ENCODE measurements at regions of chr19 and their contacts with region 1.

Region 1: DNA sequence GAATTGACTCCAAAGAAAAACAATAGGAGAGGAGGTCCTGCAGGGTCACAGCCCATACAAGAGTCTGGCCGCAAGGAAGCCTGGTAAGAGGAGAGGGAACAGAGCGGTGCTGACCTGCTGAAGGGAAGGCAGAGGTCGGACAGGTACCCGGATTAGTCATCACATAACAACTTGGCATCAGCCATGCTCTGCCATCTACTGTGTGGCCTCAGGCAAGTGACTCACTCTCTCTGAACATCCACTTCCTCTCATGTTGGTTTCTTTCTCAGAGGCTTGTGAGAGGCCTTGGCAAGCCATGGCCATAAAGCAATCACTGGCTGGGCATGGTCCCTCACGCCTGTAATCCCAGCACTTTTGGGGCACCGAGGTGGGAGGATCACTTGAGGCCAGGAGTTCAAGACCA is 7.4 kb upstream of the CAPNS1 start:
- DNase-seq: no peak
- ATAC-seq: no peak
- H3K4me3 ChIP-seq: no peak overlapping the region
- H3K27ac ChIP-seq: no peak overlapping the region
- H3K4me1 ChIP-seq: peaks cover 56% of the 10 kb centered on the region
- H3K27me3 ChIP-seq: no peaks in the 10 kb centered on the region
- CTCF ChIP-seq: no peak
- EP300 ChIP-seq: no peak
- POLR2A ChIP-seq: no peak
- RAD21 ChIP-seq: no peak

Region 2: GRCh38 chr19:36009220-36009619 is 123.3 kb before region 1 on chr19:
- CTCF ChIA-PET with region 1: no interaction called
- POLR2A ChIA-PET with region 1: no interaction called
- in situ Hi-C with region 1: no loop called
- intact Hi-C with region 1: no loop called
- DNase-seq: no peak
- ATAC-seq: no peak
- H3K4me3 ChIP-seq: peak overlapping the region in 1 of 3 experiments; percentile 93; a peak in 2 of 6 replicates
- H3K27ac ChIP-seq: peak overlapping the region; percentile 35
- H3K4me1 ChIP-seq: peaks cover 46% of the 10 kb centered on the region
- H3K27me3 ChIP-seq: no peaks in the 10 kb centered on the region; a peak in 1 of 5 replicates
- CTCF ChIP-seq: no peak
- EP300 ChIP-seq: no peak
- POLR2A ChIP-seq: no peak
- RAD21 ChIP-seq: no peak

Region 3: DNA sequence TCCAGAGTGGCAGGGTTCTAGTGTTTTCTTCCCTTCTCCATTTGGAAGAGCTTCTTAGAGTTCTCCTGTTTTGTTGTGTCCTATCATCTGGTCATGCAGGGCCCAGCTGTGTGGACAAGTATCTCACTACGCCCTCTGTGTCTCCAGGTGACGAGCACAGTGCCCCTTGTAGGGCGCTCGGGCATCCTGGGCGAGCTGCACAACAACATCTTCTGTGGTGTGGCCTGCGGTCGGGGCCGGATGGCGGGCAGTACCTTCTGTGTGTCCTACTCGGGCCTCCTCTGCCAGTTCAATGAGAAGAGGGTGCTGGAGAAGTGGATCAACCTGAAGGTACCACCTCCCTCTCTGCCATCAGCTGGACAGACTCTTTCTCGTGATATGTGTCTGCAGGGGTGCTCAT is 64.8 kb before region 1 on chr19:
- CTCF ChIA-PET with region 1: no interaction called
- POLR2A ChIA-PET with region 1: no interaction called
- in situ Hi-C with region 1: no loop called
- intact Hi-C with region 1: no loop called
- DNase-seq: no peak
- ATAC-seq: no peak
- H3K4me3 ChIP-seq: no peak overlapping the region
- H3K27ac ChIP-seq: no peak overlapping the region
- H3K4me1 ChIP-seq: no peaks in the 10 kb centered on the region
- H3K27me3 ChIP-seq: no peaks in the 10 kb centered on the region
- CTCF ChIP-seq: no peak
- EP300 ChIP-seq: no peak
- POLR2A ChIP-seq: no peak
- RAD21 ChIP-seq: no peak

Region 4: GRCh38 chr19:36114763-36115452 is 17.6 kb before region 1 on chr19 and contains the start of gene POLR2I:
- CTCF ChIA-PET with region 1: no interaction called
- POLR2A ChIA-PET with region 1: interaction called, 36 read pairs
- in situ Hi-C with region 1: no loop called
- intact Hi-C with region 1: no loop called
- DNase-seq: peak; percentile 99
- ATAC-seq: peak; percentile 93
- H3K4me3 ChIP-seq: peak within 1 kb of the TSS; percentile 72 to 93 (median 88)
- H3K27ac ChIP-seq: peak within 1 kb of the TSS; percentile 77
- H3K4me1 ChIP-seq: peaks cover 45% of the 10 kb centered on the region
- H3K27me3 ChIP-seq: no peaks in the 10 kb centered on the region; a peak in 1 of 5 replicates
- CTCF ChIP-seq: 0 out of 2 replicates have a peak, but pooled peaks have one; percentile 21
- EP300 ChIP-seq: no peak
- POLR2A ChIP-seq: peak; percentile 60 to 75
- RAD21 ChIP-seq: peak; percentile 66
- total RNA-seq, gene POLR2I: 101 and 104 TPM in 2 replicates

Region 5: GRCh38 chr19:36120092-36120983 is 12.2 kb before region 1 on chr19:
- CTCF ChIA-PET with region 1: no interaction called
- POLR2A ChIA-PET with region 1: interaction called, 36 read pairs
- in situ Hi-C with region 1: no loop called
- intact Hi-C with region 1: no loop called
- DNase-seq: peak; percentile 92
- ATAC-seq: peak; percentile 82
- H3K4me3 ChIP-seq: peak overlapping the region; percentile 58 to 77 (median 64); a peak in 5 of 6 replicates
- H3K27ac ChIP-seq: peak overlapping the region; percentile 76
- H3K4me1 ChIP-seq: peaks cover 60% of the 10 kb centered on the region
- H3K27me3 ChIP-seq: no peaks in the 10 kb centered on the region
- CTCF ChIP-seq: peak; percentile 24
- EP300 ChIP-seq: peak; percentile 51 to 82; a peak in 3 of 4 replicates
- POLR2A ChIP-seq: peak in 1 of 2 experiments; percentile 78; a peak in 2 of 4 replicates
- RAD21 ChIP-seq: no peak

Region 6: DNA sequence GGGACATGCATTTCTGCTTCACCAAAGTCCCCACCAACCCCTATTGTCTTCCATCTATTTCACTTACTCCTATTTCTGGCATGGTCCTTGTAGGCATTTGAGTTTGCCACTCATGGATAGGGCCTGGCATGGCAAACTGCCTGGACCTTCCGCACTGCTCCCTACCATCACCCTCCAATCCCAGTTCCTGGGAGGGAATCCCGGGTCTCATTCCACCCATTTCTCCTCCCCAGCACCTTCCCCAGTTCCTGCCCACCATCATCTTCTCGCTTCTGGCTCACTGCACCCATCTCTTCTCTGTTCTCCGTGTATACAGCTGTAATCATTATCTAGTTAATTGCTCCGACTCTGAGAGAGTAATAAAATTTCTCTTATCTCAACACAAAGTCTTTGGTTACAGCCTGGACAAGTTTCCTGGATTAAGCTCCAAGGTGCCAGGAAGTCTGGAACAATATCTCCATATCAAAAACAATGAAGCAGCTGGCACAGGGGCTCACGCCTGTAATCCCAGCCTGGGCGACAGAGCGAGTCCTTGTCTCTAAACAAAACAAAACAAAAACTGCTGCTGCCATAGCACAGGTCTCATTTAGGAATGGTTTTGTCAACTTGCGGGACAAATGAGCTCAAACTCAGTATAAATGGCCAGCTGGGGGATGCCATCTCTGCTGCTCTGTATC is 36.7 kb after region 1 on chr19:
- CTCF ChIA-PET with region 1: interaction called, 44 read pairs
- POLR2A ChIA-PET with region 1: interaction called, 10 read pairs
- in situ Hi-C with region 1: loop called (anchors 5 kb)
- intact Hi-C with region 1: loop called (anchors 1 kb)
- DNase-seq: no peak
- ATAC-seq: no peak
- H3K4me3 ChIP-seq: no peak overlapping the region
- H3K27ac ChIP-seq: no peak overlapping the region
- H3K4me1 ChIP-seq: 0 out of 2 replicates have a peak, but pooled peaks cover 10% of the 10 kb centered on the region
- H3K27me3 ChIP-seq: no peaks in the 10 kb centered on the region; a peak in 1 of 5 replicates
- CTCF ChIP-seq: no peak
- EP300 ChIP-seq: no peak
- POLR2A ChIP-seq: no peak
- RAD21 ChIP-seq: no peak

Region 7: GRCh38 chr19:36214386-36215275 is 82.1 kb after region 1 on chr19 and contains the starts of genes ZNF146 and ZNF565:
- CTCF ChIA-PET with region 1: no interaction called
- POLR2A ChIA-PET with region 1: interaction called, 14 read pairs
- in situ Hi-C with region 1: no loop called
- intact Hi-C with region 1: no loop called
- DNase-seq: peak; percentile 98
- ATAC-seq: peak; percentile 96
- H3K4me3 ChIP-seq: peak within 1 kb of the TSS; percentile 78 to 97 (median 80)
- H3K27ac ChIP-seq: peak within 1 kb of the TSS; percentile 98
- H3K4me1 ChIP-seq: peaks cover 41% of the 10 kb centered on the region
- H3K27me3 ChIP-seq: peaks cover 0 to 3% of the 10 kb centered on the region in 2 experiments; a peak in 1 of 5 replicates
- CTCF ChIP-seq: peak; percentile 4; the same call in 1 of the 2 replicates
- EP300 ChIP-seq: no peak
- POLR2A ChIP-seq: peak; percentile 55 to 91; a peak in 3 of 4 replicates
- RAD21 ChIP-seq: no peak
- total RNA-seq, gene ZNF146: 52.7 and 93.3 TPM in 2 replicates
- total RNA-seq, gene ZNF565: 5.2 and 6.0 TPM in 2 replicates

Region 8: DNA sequence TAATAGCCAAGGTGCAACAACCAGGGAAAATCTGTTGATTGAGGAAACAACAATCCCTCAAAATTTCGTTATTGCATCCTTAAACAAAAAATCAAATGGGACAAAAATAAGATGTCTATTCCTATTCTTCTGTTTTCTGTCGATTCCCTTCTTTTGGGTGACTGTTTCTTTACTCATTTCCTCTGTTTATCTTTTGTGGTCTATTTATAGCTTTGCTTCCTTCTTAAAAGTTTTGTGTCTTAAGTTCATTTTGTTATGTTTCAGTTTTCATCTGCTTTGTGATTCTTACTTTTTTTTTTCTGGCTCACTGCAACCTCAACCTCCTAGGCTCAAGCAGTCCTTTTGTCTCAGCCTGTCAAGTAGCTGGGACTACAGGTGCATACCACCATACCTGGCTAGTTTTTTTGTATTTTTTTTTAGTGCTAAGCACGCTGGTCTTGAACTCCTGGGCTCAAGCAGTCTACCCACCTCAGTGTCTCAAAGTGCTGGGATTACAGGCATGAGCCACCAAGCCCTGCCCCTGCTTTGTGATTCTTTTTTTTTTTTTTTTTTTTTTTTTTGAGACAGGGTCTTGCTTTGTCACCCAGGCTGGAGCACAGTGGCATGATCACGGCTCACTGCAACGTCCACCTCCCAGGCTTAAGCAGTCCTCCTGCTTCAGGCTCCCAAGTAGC is 92.9 kb after region 1 on chr19:
- CTCF ChIA-PET with region 1: no interaction called
- POLR2A ChIA-PET with region 1: no interaction called
- in situ Hi-C with region 1: no loop called
- intact Hi-C with region 1: no loop called
- DNase-seq: no peak
- ATAC-seq: no peak
- H3K4me3 ChIP-seq: no peak overlapping the region
- H3K27ac ChIP-seq: no peak overlapping the region
- H3K4me1 ChIP-seq: peaks cover 13% of the 10 kb centered on the region
- H3K27me3 ChIP-seq: no peaks in the 10 kb centered on the region
- CTCF ChIP-seq: no peak
- EP300 ChIP-seq: no peak
- POLR2A ChIP-seq: no peak
- RAD21 ChIP-seq: no peak

Measured in HepG2 (cell line).